ENCODE measurements at regions of chr21 and their contacts with region 1.

Region 1: DNA sequence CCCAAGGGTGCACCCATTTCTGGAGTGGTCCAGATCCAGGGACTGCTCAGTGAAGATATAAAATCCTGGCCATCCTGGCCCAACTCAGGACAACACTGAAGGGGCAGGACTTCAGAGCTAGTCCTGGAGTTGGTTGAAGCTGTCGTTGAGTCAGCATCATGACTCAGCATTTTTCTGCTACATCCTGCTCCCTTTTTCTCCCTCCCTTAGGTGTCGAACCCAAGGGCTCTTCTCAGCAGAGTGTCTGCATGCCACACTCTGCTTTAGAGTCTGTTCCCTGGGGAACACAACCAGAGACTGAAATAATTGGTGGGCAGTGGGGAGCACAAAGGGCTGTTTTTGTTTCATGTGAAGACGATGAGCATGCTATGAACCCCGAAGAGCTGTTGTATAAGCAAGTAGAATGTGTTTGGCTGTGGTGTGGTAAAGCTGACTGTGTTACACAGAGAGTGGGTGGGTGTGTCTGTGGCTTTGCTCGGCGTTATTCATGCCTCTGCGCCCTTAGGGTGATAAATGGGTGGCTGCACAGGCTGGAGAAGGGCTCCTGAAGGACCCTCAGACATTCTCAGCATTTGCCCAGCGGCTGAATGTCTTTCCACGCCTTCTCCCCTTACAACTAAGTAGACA is 167.2 kb downstream of the CYYR1 start:
- DNase-seq: peak; percentile 91
- H3K4me3 ChIP-seq: peak overlapping the region; percentile 44 to 53 (median 52)
- H3K27ac ChIP-seq: peak overlapping the region; percentile 74
- H3K4me1 ChIP-seq: peaks cover 15% of the 10 kb centered on the region
- H3K27me3 ChIP-seq: no peaks in the 10 kb centered on the region
- CTCF ChIP-seq: no peak

Region 2: GRCh38 chr21:26245428-26245827 is 160.4 kb before region 1 on chr21:
- CTCF ChIA-PET with region 1: interaction called, 13 read pairs
- dilution Hi-C with region 1: no loop called
- in situ Hi-C with region 1: no loop called
- intact Hi-C with region 1: no loop called
- DNase-seq: no peak
- H3K4me3 ChIP-seq: no peak overlapping the region
- H3K27ac ChIP-seq: no peak overlapping the region
- H3K4me1 ChIP-seq: no peaks in the 10 kb centered on the region
- H3K27me3 ChIP-seq: no peaks in the 10 kb centered on the region
- CTCF ChIP-seq: no peak

Region 3: GRCh38 chr21:26267389-26267788 is 138.5 kb before region 1 on chr21:
- CTCF ChIA-PET with region 1: no interaction called
- dilution Hi-C with region 1: no loop called
- in situ Hi-C with region 1: no loop called
- intact Hi-C with region 1: loop called (anchors 10 kb)
- DNase-seq: no peak
- H3K4me3 ChIP-seq: no peak overlapping the region
- H3K27ac ChIP-seq: no peak overlapping the region
- H3K4me1 ChIP-seq: no peaks in the 10 kb centered on the region
- H3K27me3 ChIP-seq: no peaks in the 10 kb centered on the region
- CTCF ChIP-seq: no peak

Region 4: GRCh38 chr21:26351661-26352060 is 54.2 kb before region 1 on chr21:
- CTCF ChIA-PET with region 1: no interaction called
- dilution Hi-C with region 1: no loop called
- in situ Hi-C with region 1: no loop called
- intact Hi-C with region 1: loop called (anchors 10 kb)
- DNase-seq: peak; percentile 65
- H3K4me3 ChIP-seq: no peak overlapping the region
- H3K27ac ChIP-seq: peak overlapping the region; percentile 36
- H3K4me1 ChIP-seq: peaks cover 4% of the 10 kb centered on the region
- H3K27me3 ChIP-seq: no peaks in the 10 kb centered on the region
- CTCF ChIP-seq: no peak

Region 5: GRCh38 chr21:26389971-26390641 is 15.7 kb before region 1 on chr21:
- CTCF ChIA-PET with region 1: interaction called, 3 read pairs
- dilution Hi-C with region 1: no loop called
- in situ Hi-C with region 1: no loop called
- intact Hi-C with region 1: loop called (anchors 1 kb)
- DNase-seq: peak; percentile 100
- H3K4me3 ChIP-seq: no peak overlapping the region
- H3K27ac ChIP-seq: peak overlapping the region; percentile 79
- H3K4me1 ChIP-seq: peaks cover 47% of the 10 kb centered on the region
- H3K27me3 ChIP-seq: no peaks in the 10 kb centered on the region
- CTCF ChIP-seq: no peak

Region 6: DNA sequence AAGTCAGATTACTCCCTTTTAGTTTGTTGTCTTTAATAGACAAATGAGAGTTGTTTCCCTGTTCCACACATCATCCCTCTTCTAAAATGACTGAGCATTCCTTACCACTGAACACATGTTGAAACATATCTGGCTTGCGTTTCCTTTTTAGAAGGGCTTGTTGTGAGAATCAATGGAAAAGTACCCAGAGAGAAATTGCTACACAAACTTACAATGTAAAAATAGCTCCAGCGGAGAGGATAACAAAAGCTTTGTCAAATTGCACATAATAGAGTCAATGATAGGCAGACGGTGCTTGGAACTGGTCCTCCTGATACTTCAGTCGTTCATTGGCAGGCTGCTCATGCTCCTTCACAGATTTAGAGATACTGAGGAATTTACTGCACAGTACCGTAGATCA is 43.3 kb after region 1 on chr21:
- CTCF ChIA-PET with region 1: no interaction called
- dilution Hi-C with region 1: no loop called
- in situ Hi-C with region 1: no loop called
- intact Hi-C with region 1: loop called (anchors 5 kb)
- DNase-seq: peak; percentile 87
- H3K4me3 ChIP-seq: peak overlapping the region in 2 of 3 experiments; percentile 8 to 19
- H3K27ac ChIP-seq: peak overlapping the region; percentile 78
- H3K4me1 ChIP-seq: peaks cover 23% of the 10 kb centered on the region
- H3K27me3 ChIP-seq: no peaks in the 10 kb centered on the region
- CTCF ChIP-seq: no peak